ENCODE measurements at regions of chr6 and their contacts with region 1.

Region 1: GRCh38 chr6:16698997-16699868 is 62.0 kb downstream of the ATXN1 start:
- DNase-seq: no peak
- H3K4me3 Mint-ChIP-seq: peak overlapping the region; percentile 80
- H3K27ac Mint-ChIP-seq: peak overlapping the region; percentile 98
- H3K4me1 Mint-ChIP-seq: peaks cover 74% of the 10 kb centered on the region
- H3K27me3 Mint-ChIP-seq: no peaks in the 10 kb centered on the region

Region 2: GRCh38 chr6:16523606-16524379 is 175.4 kb before region 1 on chr6:
- intact Hi-C with region 1: no loop called
- DNase-seq: no peak
- H3K4me3 Mint-ChIP-seq: no peak overlapping the region
- H3K27ac Mint-ChIP-seq: peak overlapping the region; percentile 75
- H3K4me1 Mint-ChIP-seq: peaks cover 51% of the 10 kb centered on the region
- H3K27me3 Mint-ChIP-seq: no peaks in the 10 kb centered on the region

Region 3: GRCh38 chr6:16670183-16670582 is 29.1 kb before region 1 on chr6:
- intact Hi-C with region 1: loop called (anchors 1 kb)
- DNase-seq: no peak
- H3K4me3 Mint-ChIP-seq: peak overlapping the region; percentile 51
- H3K27ac Mint-ChIP-seq: peak overlapping the region; percentile 94
- H3K4me1 Mint-ChIP-seq: peaks cover 84% of the 10 kb centered on the region
- H3K27me3 Mint-ChIP-seq: no peaks in the 10 kb centered on the region

Region 4: DNA sequence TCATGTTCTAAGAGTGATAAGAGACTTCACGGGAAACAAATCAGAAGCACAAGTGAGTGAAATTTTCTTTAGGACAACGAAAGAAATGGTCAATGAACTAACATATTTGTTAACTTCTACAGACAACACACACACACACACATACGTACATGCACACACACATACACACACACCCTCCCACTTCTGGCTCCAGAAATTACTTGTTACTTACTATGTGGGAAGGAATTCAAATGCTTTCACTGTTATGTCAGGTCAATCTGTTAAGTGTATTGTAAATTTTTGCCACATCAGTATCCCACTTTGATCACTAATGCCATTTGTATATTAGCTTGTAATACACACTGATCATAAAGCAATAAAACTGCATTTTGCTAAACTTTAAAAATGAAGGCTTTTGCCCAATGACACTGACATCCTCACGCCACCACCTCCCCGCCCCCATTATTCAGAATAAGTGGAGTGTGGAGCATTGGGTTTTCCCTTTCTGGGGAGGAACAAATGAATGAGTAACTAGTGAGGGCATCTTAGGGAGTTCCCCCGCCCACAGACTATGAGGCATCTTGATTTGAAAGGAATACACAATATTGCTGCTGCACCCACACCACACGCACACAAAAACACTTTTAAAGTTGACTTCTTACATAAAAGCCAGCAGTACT is 14.2 kb before region 1 on chr6:
- intact Hi-C with region 1: loop called (anchors 1 kb)
- DNase-seq: peak; percentile 71
- H3K4me3 Mint-ChIP-seq: peak overlapping the region; percentile 43
- H3K27ac Mint-ChIP-seq: peak overlapping the region; percentile 88
- H3K4me1 Mint-ChIP-seq: peaks cover 97% of the 10 kb centered on the region
- H3K27me3 Mint-ChIP-seq: no peaks in the 10 kb centered on the region

Region 5: DNA sequence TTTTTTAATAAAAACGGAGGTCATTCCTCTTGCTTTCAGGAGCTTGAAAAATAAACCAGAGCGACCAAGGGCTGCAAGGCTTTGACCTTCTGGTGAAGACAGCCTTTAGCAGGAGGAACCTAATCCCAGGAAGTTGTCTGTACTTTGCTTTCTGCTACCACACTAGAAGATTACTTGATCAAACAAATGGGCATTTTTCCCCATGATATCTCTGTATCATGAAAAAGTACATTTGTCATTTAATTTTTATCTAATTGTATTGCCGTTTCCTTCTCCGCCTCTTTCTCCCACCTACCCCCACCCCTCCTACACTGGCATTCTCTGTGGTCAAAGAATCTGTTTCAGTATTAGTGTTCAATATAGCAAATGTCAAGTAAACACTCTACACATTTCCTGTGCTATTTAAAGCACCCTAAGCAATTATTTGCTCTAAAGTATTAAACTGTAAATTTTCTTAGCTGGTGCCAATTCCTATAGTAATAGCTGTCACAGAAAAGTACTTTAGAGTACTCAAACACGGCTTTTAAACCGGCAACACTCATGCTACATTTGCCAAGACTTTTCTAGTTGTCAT is 32.3 kb after region 1 on chr6:
- intact Hi-C with region 1: loop called (anchors 1 kb)
- DNase-seq: peak; percentile 36
- H3K4me3 Mint-ChIP-seq: peak overlapping the region; percentile 51
- H3K27ac Mint-ChIP-seq: peak overlapping the region; percentile 89
- H3K4me1 Mint-ChIP-seq: peaks cover 71% of the 10 kb centered on the region
- H3K27me3 Mint-ChIP-seq: no peaks in the 10 kb centered on the region

Region 6: GRCh38 chr6:16776394-16777017 is 77.3 kb after region 1 on chr6:
- intact Hi-C with region 1: no loop called
- DNase-seq: no peak
- H3K4me3 Mint-ChIP-seq: no peak overlapping the region
- H3K27ac Mint-ChIP-seq: no peak overlapping the region
- H3K4me1 Mint-ChIP-seq: peaks cover 7% of the 10 kb centered on the region
- H3K27me3 Mint-ChIP-seq: peaks cover 4% of the 10 kb centered on the region

Measured in activated T-helper 1 cell treated with anti-CD3 and anti-CD28 coated beads, Interleukin-12 subunit alpha, Interleukin-12 subunit beta, Interleukin-2, Interleukin-4 antibody, amounts not matched to agents 30 ng/mL and 10 ng/mL and 1 ng/mL, durations not matched to agents 14 hours and 24 hours and 36 hours (primary cell).